Activated CD4-positive, alpha-beta T cell treated with anti-CD3 and anti-CD28 coated beads for 36 hours (primary cell): ENCODE measurements at regions of chr10 and their contacts with region 1.

Region 1: GRCh38 chr10:61943674-61944410 is 42.3 kb downstream of the ARID5B start:
- DNase-seq: peak; percentile 51
- ATAC-seq: peak; percentile 78
- H3K4me3 Mint-ChIP-seq: peak overlapping the region; percentile 59
- H3K27ac Mint-ChIP-seq: peak overlapping the region; percentile 98
- H3K4me1 Mint-ChIP-seq: peaks cover 71% of the 10 kb centered on the region
- H3K27me3 Mint-ChIP-seq: no peaks in the 10 kb centered on the region

Region 2: DNA sequence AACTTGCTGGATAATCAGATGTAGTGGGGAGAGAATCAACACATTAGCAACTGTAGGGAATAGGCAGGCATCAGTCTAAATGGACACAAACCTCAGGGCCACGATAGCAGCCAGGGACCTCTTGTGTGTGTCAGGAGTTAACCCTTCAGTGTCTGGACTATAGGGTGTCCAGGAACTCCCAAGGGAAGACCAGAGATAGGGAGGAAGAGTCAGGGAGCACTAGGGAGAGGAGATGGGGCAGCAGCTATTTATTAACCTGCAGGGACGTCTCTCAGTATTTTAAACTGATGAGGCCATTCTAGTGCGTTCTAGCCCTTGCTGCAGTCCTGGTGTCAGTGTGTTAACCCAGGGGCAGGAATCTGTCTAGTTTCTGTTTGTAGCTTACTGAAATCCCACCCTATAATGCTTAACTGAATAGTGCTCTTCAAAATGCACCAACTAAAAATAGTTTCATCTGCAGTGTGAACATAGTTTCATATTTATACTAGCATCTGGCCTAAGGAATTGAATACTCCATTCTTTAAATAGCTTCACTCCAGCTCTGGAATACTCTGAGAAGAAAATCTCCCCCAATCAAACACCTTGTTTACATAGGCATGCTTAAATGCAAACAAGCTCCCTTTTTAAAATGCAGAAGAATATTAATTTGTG is 20.3 kb after region 1 on chr10:
- CTCF ChIA-PET with region 1: interaction called, 7 read pairs
- POLR2A ChIA-PET with region 1: interaction called, 8 read pairs
- intact Hi-C with region 1: loop called (anchors 1 kb)
- DNase-seq: no peak
- ATAC-seq: no peak
- H3K4me3 Mint-ChIP-seq: no peak overlapping the region
- H3K27ac Mint-ChIP-seq: peak overlapping the region; percentile 73
- H3K4me1 Mint-ChIP-seq: peaks cover 92% of the 10 kb centered on the region
- H3K27me3 Mint-ChIP-seq: no peaks in the 10 kb centered on the region

Region 3: GRCh38 chr10:61992671-61993668 is 49.1 kb after region 1 on chr10:
- CTCF ChIA-PET with region 1: interaction called, 10 read pairs
- POLR2A ChIA-PET with region 1: interaction called, 18 read pairs
- intact Hi-C with region 1: loop called (anchors 1 kb)
- DNase-seq: peak; percentile 74
- ATAC-seq: peak; percentile 50
- H3K4me3 Mint-ChIP-seq: peak overlapping the region; percentile 64
- H3K27ac Mint-ChIP-seq: peak overlapping the region; percentile 95
- H3K4me1 Mint-ChIP-seq: peaks cover 87% of the 10 kb centered on the region
- H3K27me3 Mint-ChIP-seq: no peaks in the 10 kb centered on the region

Region 4: DNA sequence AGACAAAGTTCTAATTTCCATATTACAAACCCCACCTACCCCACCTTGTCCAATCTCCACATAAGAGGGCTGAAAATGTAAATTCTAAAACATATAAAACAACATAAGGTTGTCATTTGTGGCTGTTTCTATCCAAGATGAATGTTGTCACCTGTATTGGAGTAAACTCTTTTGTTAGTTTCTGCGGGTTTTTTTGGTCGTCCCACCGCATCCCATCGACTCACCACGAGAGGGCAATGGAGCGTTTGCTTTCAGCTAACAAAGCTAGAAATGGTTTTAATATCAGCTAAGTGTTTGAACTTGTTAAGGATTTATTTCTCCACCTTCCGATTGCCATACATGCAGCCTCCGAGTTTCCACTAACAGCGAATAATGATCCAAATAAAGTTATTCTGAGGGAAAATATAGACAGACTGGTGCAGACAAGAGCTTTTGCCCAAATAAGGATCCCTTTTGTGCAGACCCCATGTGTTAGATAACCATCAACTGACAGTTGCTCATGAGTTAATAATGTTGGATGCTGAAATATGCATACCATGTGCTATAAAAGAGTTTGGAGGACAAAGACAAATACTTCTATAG is 94.9 kb after region 1 on chr10:
- CTCF ChIA-PET with region 1: interaction called, 13 read pairs
- POLR2A ChIA-PET with region 1: no interaction called
- intact Hi-C with region 1: no loop called
- DNase-seq: peak; percentile 87
- ATAC-seq: peak; percentile 60
- H3K4me3 Mint-ChIP-seq: peak overlapping the region; percentile 45
- H3K27ac Mint-ChIP-seq: peak overlapping the region; percentile 92
- H3K4me1 Mint-ChIP-seq: peaks cover 87% of the 10 kb centered on the region
- H3K27me3 Mint-ChIP-seq: no peaks in the 10 kb centered on the region

Region 5: GRCh38 chr10:62244780-62245467 is 301.1 kb after region 1 on chr10:
- CTCF ChIA-PET with region 1: interaction called, 4 read pairs
- POLR2A ChIA-PET with region 1: no interaction called
- intact Hi-C with region 1: loop called (anchors 5 kb)
- DNase-seq: peak; percentile 65
- ATAC-seq: peak; percentile 84
- H3K4me3 Mint-ChIP-seq: peak overlapping the region; percentile 36
- H3K27ac Mint-ChIP-seq: peak overlapping the region; percentile 87
- H3K4me1 Mint-ChIP-seq: peaks cover 35% of the 10 kb centered on the region
- H3K27me3 Mint-ChIP-seq: no peaks in the 10 kb centered on the region